Activated T-helper 1 cell treated with anti-CD3 and anti-CD28 coated beads, Interleukin-12 subunit alpha, Interleukin-12 subunit beta, Interleukin-2, Interleukin-4 antibody, amounts not matched to agents 30 ng/mL and 10 ng/mL and 1 ng/mL, durations not matched to agents 14 hours and 24 hours and 36 hours (primary cell): ENCODE measurements at regions of chr9 and their contacts with region 1.

Region 1: DNA sequence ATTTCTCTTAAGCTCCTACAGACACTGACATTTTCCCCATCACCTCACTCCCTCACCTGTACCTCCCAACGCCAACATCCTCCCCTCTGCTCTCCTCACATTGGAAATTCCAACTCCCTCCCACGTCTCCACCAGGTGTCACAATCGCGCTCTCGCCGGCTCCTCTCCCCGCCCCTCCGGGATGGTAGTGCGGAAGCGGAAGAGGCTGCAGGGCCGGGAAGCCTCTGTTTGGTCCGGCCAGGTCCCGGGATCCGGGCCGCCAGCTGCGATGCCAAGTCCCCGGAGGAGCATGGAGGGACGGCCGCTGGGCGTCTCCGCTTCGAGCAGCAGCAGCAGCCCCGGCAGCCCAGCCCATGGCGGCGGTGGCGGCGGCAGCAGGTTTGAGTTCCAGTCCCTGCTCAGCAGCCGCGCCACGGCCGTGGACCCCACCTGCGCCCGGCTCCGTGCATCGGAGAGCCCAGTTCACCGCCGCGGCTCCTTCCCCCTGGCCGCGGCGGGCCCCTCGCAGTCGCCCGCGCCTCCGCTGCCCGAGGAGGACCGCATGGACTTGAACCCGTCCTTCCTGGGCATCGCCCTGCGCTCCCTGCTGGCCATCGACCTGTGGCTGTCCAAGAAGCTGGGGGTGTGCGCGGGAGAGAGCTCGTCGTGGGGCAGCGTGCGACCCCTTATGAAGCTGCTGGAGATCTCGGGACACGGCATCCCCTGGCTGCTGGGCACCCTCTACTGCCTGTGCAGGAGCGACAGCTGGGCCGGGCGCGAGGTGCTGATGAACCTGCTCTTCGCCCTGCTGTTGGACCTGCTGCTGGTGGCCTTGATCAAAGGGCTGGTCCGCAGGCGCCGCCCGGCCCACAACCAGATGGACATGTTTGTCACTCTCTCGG is at the start of gene PLPP6:
- DNase-seq: peak; percentile 73
- H3K4me3 Mint-ChIP-seq: peak within 1 kb of the TSS; percentile 89
- H3K27ac Mint-ChIP-seq: peak within 1 kb of the TSS; percentile 88
- H3K4me1 Mint-ChIP-seq: peaks cover 59% of the 10 kb centered on the region
- H3K27me3 Mint-ChIP-seq: peaks cover 15% of the 10 kb centered on the region
- total RNA-seq, gene PLPP6: 5.3 and 5.7 TPM in 2 replicates

Region 2: GRCh38 chr9:4306066-4306775 is 356.1 kb before region 1 on chr9:
- intact Hi-C with region 1: loop called (anchors 5 kb)
- DNase-seq: no peak
- H3K4me3 Mint-ChIP-seq: peak overlapping the region; percentile 40
- H3K27ac Mint-ChIP-seq: peak overlapping the region; percentile 76
- H3K4me1 Mint-ChIP-seq: peaks cover 58% of the 10 kb centered on the region
- H3K27me3 Mint-ChIP-seq: peaks cover 14% of the 10 kb centered on the region

Region 3: DNA sequence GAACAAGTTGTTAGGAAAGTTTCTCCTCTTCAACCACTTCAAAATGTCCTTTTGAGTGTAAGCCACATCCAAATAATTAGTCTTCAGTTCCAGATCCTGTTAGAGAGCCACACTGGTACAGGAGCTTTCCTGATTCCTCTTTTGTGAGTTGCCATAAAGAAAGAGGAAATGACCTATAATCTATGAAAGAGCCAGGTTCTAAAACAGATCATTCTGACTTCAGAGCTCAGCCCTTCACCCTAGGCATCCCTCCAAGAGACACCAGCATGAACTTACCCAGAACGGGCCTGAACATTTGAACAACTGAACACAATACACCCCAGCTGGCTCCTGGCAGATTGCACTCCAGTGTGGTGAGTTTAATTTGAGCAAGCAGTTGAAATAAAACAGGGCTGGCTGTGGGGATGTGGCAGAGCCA is 146.4 kb before region 1 on chr9:
- intact Hi-C with region 1: loop called (anchors 5 kb)
- DNase-seq: no peak
- H3K4me3 Mint-ChIP-seq: no peak overlapping the region
- H3K27ac Mint-ChIP-seq: no peak overlapping the region
- H3K4me1 Mint-ChIP-seq: peaks cover 16% of the 10 kb centered on the region
- H3K27me3 Mint-ChIP-seq: peaks cover 8% of the 10 kb centered on the region

Region 4: GRCh38 chr9:4689687-4690104 is 27.3 kb after region 1 on chr9:
- intact Hi-C with region 1: loop called (anchors 1 kb)
- DNase-seq: no peak
- H3K4me3 Mint-ChIP-seq: no peak overlapping the region
- H3K27ac Mint-ChIP-seq: no peak overlapping the region
- H3K4me1 Mint-ChIP-seq: peaks cover 31% of the 10 kb centered on the region
- H3K27me3 Mint-ChIP-seq: no peaks in the 10 kb centered on the region

Region 5: DNA sequence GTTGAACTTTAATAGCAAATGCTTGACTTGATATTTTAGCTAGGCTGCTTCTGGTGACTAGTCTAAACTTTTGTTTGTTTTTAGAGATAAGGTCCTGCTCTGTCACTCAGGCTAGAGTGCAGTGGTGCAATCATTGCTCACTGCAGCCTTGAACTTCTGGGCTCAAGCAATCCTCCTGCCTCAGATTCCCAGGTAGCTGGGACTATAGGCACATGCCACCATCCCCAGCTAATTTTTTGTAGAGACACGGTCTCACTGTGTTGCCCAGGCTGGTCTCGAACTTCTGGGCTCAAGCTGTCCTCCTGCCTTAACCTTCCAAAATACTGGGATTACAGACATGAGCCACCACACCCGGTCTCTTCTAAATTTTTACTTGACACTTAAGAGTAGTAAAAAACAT is 37.7 kb after region 1 on chr9:
- intact Hi-C with region 1: no loop called
- DNase-seq: no peak
- H3K4me3 Mint-ChIP-seq: no peak overlapping the region
- H3K27ac Mint-ChIP-seq: no peak overlapping the region
- H3K4me1 Mint-ChIP-seq: peaks cover 9% of the 10 kb centered on the region
- H3K27me3 Mint-ChIP-seq: no peaks in the 10 kb centered on the region

Region 6: DNA sequence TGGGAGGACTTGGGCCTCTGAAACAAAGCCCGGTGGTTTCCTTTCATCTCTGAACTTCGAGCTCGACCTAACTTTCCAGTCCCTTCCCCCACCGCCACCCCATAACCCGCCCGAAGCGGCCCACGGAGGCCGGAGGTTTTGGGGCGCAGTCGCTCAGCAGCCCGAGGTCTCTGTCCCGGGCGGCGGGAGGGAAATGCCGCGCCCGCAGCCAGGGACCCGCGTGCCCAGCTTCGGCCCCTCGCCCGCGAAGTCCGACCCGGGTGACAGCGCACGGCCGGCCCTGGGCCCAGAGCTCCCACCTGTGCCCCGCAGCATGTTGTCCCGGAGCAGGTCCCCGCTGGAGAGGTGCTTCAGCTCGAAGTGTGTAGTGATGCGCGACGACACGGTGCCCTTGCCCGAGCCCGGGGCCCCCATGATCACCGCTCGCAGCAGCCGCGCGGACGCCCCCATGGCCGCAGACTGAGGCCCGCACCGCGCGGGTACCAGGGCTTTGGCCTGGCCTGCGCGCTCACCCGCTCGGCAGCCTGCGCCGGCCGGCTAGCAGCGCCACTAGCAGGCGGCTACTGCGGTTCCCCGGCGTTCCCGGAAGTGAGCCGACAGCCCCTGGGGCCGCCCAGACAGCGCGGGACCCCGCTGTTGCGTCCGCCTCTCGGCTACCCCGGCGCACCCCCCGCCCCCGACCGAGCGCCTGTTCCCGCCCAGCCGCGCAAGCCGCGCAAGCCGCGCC is 78.5 kb after region 1 on chr9 and contains the start of gene AK3:
- intact Hi-C with region 1: loop called (anchors 1 kb)
- DNase-seq: peak; percentile 81
- H3K4me3 Mint-ChIP-seq: peak within 1 kb of the TSS; percentile 89
- H3K27ac Mint-ChIP-seq: peak within 1 kb of the TSS; percentile 92
- H3K4me1 Mint-ChIP-seq: peaks cover 29% of the 10 kb centered on the region
- H3K27me3 Mint-ChIP-seq: no peaks in the 10 kb centered on the region
- total RNA-seq, gene AK3: 23.9 and 28.5 TPM in 2 replicates